ENCODE measurements at regions of chr1 and their contacts with region 1.

Region 1: GRCh38 chr1:160607011-160607671 is 27.8 kb upstream of the CD84 start:
- DNase-seq: peak; percentile 74
- H3K4me3 Mint-ChIP-seq: no peak overlapping the region
- H3K27ac Mint-ChIP-seq: peak overlapping the region; percentile 78
- H3K4me1 Mint-ChIP-seq: peaks cover 63% of the 10 kb centered on the region
- H3K27me3 Mint-ChIP-seq: no peaks in the 10 kb centered on the region

Region 2: DNA sequence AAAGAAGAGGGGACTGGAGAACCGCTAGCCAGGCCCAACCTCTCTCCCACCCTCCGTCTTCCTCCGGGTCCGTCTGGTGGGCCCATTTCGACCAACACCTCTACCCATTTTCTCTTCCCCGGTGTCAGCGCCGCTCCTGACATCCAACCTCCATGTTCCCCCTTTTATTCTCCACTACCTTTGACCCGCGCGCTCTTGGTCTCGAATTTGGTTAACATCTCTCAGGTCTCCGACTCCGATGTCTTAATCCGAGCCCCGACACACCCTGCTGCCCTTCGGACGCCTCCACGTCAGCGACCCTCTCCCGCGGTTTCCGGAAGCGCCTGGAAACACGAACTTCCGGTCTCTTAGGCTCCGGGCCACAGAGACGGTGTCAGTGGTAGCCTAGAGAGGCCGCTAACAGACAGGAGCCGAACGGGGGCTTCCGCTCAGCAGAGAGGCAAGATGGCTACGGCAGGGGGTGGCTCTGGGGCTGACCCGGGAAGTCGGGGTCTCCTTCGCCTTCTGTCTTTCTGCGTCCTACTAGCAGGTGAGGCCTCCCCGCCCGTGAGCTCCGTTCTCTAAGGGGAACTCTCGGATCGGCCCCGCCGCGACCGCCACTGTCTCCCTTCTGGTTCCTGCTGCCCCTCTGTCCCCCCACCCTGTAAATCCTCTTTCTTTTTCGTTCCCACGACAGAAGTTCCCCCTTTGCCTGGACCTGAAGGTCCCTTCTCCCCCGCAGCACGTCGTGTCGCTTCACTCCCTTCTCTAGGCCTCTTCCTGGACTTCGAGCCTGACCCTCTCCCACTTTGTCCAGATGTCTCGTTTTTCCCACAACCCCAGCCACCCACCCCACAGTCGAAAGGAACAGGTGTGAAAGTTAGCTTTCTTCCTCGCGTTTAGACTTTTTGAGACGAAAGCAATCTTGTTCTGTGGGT is 263.9 kb before region 1 on chr1 and contains the starts of genes COPA and NCSTN:
- CTCF ChIA-PET with region 1: interaction called, 5 read pairs
- POLR2A ChIA-PET with region 1: no interaction called
- intact Hi-C with region 1: loop called (anchors 1 kb)
- DNase-seq: peak; percentile 95
- H3K4me3 Mint-ChIP-seq: peak within 1 kb of the TSS; percentile 93
- H3K27ac Mint-ChIP-seq: peak within 1 kb of the TSS; percentile 93
- H3K4me1 Mint-ChIP-seq: peaks cover 41% of the 10 kb centered on the region
- H3K27me3 Mint-ChIP-seq: no peaks in the 10 kb centered on the region
- total RNA-seq, gene COPA: 132 TPM
- total RNA-seq, gene NCSTN: 39.8 to 42.6 TPM

Region 3: DNA sequence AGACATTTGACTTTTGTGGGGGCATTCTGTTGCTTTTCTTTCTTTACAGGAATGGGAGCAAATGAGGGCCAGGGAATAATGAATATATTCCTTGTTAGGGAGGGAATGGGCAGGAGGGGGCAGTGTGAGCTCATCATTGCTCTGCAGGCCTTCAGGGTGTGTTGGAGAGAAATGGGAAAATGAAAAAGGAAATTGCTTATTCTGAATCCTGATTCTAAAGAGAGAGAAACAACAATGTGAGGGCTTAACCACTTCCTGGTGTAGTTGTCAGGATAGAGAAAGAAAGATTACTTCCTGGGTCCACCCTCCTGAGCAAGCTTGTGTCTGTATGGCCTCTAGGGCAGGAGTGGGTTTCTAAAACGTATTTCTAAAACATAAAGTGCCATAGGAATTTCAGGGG is 178.5 kb before region 1 on chr1:
- CTCF ChIA-PET with region 1: interaction called, 102 read pairs
- POLR2A ChIA-PET with region 1: interaction called, 4 read pairs
- intact Hi-C with region 1: loop called (anchors 1 kb)
- DNase-seq: peak; percentile 57
- H3K4me3 Mint-ChIP-seq: no peak overlapping the region
- H3K27ac Mint-ChIP-seq: peak overlapping the region; percentile 77
- H3K4me1 Mint-ChIP-seq: peaks cover 60% of the 10 kb centered on the region
- H3K27me3 Mint-ChIP-seq: no peaks in the 10 kb centered on the region

Region 4: GRCh38 chr1:160539990-160540858 is 66.9 kb before region 1 on chr1:
- CTCF ChIA-PET with region 1: interaction called, 134 read pairs
- POLR2A ChIA-PET with region 1: no interaction called
- intact Hi-C with region 1: loop called (anchors 1 kb)
- DNase-seq: peak; percentile 71
- H3K4me3 Mint-ChIP-seq: peak overlapping the region; percentile 46
- H3K27ac Mint-ChIP-seq: peak overlapping the region; percentile 95
- H3K4me1 Mint-ChIP-seq: peaks cover 59% of the 10 kb centered on the region
- H3K27me3 Mint-ChIP-seq: no peaks in the 10 kb centered on the region

Region 5: DNA sequence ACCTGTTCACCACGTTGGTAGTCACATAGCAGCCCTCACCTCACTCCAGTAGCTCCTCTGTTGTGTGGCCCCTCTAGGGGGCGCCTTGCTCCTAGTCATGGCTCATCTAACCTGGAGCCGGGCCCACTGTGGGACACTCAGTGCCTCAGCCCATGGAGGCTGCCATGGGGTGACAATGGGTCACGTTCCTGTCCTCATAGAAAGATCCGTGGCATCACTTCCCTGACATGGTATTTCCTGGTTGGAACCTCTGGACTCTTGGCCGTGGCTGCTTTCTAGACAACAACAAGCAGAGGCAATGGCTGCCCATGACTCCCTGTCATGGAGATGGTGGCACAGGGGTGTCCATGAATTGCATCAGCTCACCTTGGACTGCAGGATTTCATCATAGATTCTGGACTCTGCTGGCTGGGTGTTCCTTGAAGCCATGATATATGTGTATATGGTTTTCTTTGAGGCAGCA is 56.5 kb before region 1 on chr1:
- CTCF ChIA-PET with region 1: interaction called, 134 read pairs
- POLR2A ChIA-PET with region 1: interaction called, 5 read pairs
- intact Hi-C with region 1: loop called (anchors 1 kb)
- DNase-seq: peak; percentile 82
- H3K4me3 Mint-ChIP-seq: no peak overlapping the region
- H3K27ac Mint-ChIP-seq: peak overlapping the region; percentile 61
- H3K4me1 Mint-ChIP-seq: peaks cover 34% of the 10 kb centered on the region
- H3K27me3 Mint-ChIP-seq: no peaks in the 10 kb centered on the region

Region 6: DNA sequence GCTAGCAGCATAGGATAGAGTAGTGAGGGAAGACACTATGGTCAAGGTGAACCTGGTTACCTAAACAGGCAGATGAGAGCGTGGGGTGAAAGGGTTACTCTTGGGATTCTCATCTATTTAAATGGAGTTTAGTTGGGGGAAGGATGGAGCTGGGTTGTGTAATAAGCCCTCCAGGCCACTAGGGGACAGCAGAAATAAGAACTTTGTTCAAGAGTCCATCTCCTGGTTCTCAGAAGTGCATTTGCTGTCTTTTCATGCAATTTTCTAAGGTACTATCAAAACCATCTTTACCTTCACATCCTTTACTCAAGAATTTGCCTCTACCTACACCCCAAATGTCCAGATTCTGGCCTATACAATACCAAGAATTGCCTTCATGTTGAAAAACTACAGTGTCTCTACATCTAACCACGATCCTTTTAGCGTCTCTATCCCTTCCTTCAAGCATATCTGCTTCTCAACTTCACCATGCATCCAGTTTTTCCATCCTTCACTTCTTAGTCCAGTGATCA is 11.7 kb after region 1 on chr1:
- CTCF ChIA-PET with region 1: interaction called, 48 read pairs
- POLR2A ChIA-PET with region 1: interaction called, 3 read pairs
- intact Hi-C with region 1: no loop called
- DNase-seq: peak; percentile 59
- H3K4me3 Mint-ChIP-seq: no peak overlapping the region
- H3K27ac Mint-ChIP-seq: peak overlapping the region; percentile 68
- H3K4me1 Mint-ChIP-seq: peaks cover 63% of the 10 kb centered on the region
- H3K27me3 Mint-ChIP-seq: no peaks in the 10 kb centered on the region

Region 7: GRCh38 chr1:160789702-160790611 is 182.8 kb after region 1 on chr1:
- CTCF ChIA-PET with region 1: no interaction called
- POLR2A ChIA-PET with region 1: no interaction called
- intact Hi-C with region 1: no loop called
- DNase-seq: no peak
- H3K4me3 Mint-ChIP-seq: no peak overlapping the region
- H3K27ac Mint-ChIP-seq: no peak overlapping the region
- H3K4me1 Mint-ChIP-seq: peaks cover 12% of the 10 kb centered on the region
- H3K27me3 Mint-ChIP-seq: no peaks in the 10 kb centered on the region

Measured in activated CD4-positive, alpha-beta memory T cell treated with anti-CD3 and anti-CD28 coated beads for 36 hours (primary cell).